Activated CD4-positive, alpha-beta T cell treated with anti-CD3 and anti-CD28 coated beads, Interleukin-2, amount 10 ng/mL, durations not matched to agents 7 days and 5 days (primary cell): ENCODE measurements at regions of chr7 and their contacts with region 1.

Region 1: GRCh38 chr7:5557920-5558401 is 134.3 kb upstream of the TNRC18 start:
- DNase-seq: no peak
- H3K4me3 Mint-ChIP-seq: peak overlapping the region; percentile 74
- H3K27ac Mint-ChIP-seq: peak overlapping the region; percentile 91
- H3K4me1 Mint-ChIP-seq: peaks cover 54% of the 10 kb centered on the region
- H3K27me3 Mint-ChIP-seq: peaks cover 12% of the 10 kb centered on the region

Region 2: GRCh38 chr7:5494683-5495561 is 63.0 kb before region 1 on chr7:
- CTCF ChIA-PET with region 1: interaction called, 11 read pairs
- POLR2A ChIA-PET with region 1: no interaction called
- DNase-seq: peak; percentile 85
- H3K4me3 Mint-ChIP-seq: no peak overlapping the region
- H3K27ac Mint-ChIP-seq: no peak overlapping the region
- H3K4me1 Mint-ChIP-seq: peaks cover 36% of the 10 kb centered on the region
- H3K27me3 Mint-ChIP-seq: no peaks in the 10 kb centered on the region

Region 3: GRCh38 chr7:5526100-5526905 is 31.7 kb before region 1 on chr7:
- CTCF ChIA-PET with region 1: interaction called, 15 read pairs
- POLR2A ChIA-PET with region 1: interaction called, 5 read pairs
- DNase-seq: peak; percentile 29
- H3K4me3 Mint-ChIP-seq: peak overlapping the region; percentile 99
- H3K27ac Mint-ChIP-seq: peak overlapping the region; percentile 97
- H3K4me1 Mint-ChIP-seq: peaks cover 28% of the 10 kb centered on the region
- H3K27me3 Mint-ChIP-seq: no peaks in the 10 kb centered on the region

Region 4: DNA sequence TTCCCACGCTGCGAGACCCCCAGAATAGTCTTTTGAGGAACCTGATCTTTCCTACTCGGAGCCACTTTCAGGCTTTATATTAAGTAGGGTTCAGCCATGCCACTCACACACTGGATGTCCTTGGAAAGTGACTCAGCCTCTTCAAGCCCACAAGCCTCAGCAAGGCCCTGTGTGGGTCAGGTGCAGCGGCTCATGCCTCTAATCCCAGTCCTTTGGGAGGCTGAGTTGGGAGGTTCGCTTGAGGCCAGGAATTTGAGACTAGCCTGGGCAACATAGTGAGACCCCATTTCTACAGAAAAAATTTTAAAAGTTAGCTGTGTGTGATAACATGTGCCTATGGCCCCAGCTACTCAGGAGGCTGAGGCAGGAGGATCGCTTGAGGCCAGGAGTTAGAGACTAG is 14.6 kb before region 1 on chr7:
- CTCF ChIA-PET with region 1: interaction called, 11 read pairs
- POLR2A ChIA-PET with region 1: interaction called, 4 read pairs
- DNase-seq: no peak
- H3K4me3 Mint-ChIP-seq: no peak overlapping the region
- H3K27ac Mint-ChIP-seq: no peak overlapping the region
- H3K4me1 Mint-ChIP-seq: peaks cover 6% of the 10 kb centered on the region
- H3K27me3 Mint-ChIP-seq: peaks cover 2% of the 10 kb centered on the region

Region 5: GRCh38 chr7:5686131-5686530 is 128.2 kb after region 1 on chr7:
- CTCF ChIA-PET with region 1: no interaction called
- POLR2A ChIA-PET with region 1: no interaction called
- DNase-seq: no peak
- H3K4me3 Mint-ChIP-seq: no peak overlapping the region
- H3K27ac Mint-ChIP-seq: no peak overlapping the region
- H3K4me1 Mint-ChIP-seq: peaks cover 86% of the 10 kb centered on the region
- H3K27me3 Mint-ChIP-seq: no peaks in the 10 kb centered on the region

Region 6: DNA sequence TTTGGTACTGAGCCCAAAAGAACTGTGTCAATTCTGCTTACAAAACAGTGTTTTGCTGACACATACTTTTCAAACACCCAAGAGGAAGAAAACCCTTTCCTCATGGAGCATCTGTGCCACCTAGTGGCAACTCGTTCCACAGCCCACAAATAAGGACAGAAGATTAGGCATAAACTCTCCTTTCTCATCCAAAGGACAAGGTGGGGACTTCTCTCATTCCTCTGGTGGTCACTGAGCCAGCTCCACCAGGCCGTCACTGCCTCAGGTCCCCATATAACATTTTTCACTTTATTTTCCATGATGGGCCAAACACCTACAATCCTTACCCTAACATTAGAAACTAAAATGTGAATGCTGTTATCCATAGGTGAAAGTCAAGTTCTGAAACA is 146.6 kb after region 1 on chr7:
- CTCF ChIA-PET with region 1: interaction called, 26 read pairs
- POLR2A ChIA-PET with region 1: no interaction called
- DNase-seq: peak; percentile 83
- H3K4me3 Mint-ChIP-seq: no peak overlapping the region
- H3K27ac Mint-ChIP-seq: no peak overlapping the region
- H3K4me1 Mint-ChIP-seq: peaks cover 45% of the 10 kb centered on the region
- H3K27me3 Mint-ChIP-seq: no peaks in the 10 kb centered on the region

Region 7: DNA sequence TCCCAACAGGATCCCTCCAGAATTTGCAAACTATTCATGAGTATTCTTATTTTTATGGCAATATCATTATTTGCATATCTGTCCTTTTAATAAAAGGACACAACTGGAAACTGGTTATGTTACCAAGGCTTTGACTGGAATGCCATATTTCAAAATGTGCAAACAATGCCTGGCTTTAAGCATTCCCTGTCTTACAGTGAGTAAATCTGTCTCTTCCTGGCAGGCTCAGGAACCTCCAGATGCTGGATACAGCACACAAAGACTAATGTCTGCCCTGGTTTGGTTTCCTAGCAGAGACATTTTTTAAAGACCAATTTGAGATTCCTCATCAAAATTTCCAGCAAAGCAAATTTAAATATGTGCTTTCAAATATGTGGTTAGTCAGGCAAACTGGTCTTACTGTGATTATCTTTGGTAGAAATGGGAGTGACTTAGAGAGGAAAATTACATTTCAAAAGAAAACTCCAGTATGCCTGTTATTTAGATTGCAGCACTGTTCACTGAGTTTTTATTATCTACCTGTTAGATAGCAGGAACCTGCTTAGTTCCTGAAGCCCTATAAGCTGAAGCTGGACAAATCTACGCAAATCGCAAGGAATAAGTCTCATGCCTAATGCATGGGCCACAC is 192.2 kb after region 1 on chr7:
- CTCF ChIA-PET with region 1: no interaction called
- POLR2A ChIA-PET with region 1: no interaction called
- DNase-seq: no peak
- H3K4me3 Mint-ChIP-seq: no peak overlapping the region
- H3K27ac Mint-ChIP-seq: no peak overlapping the region
- H3K4me1 Mint-ChIP-seq: no peaks in the 10 kb centered on the region
- H3K27me3 Mint-ChIP-seq: no peaks in the 10 kb centered on the region